Posterior vena cava (tissue), 2 donors: ENCODE measurements at regions of chr18 and their contacts with region 1.

Region 1: DNA sequence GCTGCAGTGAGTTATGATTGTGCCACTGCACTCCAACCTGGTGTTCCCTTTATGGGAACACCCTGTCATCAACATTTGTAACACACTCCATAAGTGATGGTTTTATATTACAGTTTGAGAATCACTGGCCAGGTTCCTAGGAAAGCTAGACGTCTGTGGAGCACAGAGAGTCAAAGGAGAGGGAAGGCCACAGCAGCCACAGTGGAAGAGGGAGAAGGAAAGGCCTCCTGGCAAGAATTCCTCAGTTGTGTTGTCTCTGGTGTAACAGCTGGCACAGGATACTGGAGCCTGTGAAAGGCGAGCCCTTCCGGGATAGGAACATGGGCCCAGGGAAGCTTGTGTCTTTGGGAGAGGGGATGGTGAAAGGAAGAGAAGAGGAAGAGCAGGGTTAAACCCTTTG is 360.5 kb upstream of the PIK3C3 start:
- DNase-seq: no peak

Region 2: GRCh38 chr18:41545091-41545888 is 49.3 kb before region 1 on chr18:
- intact Hi-C with region 1: loop called in 1 of 2 experiments (anchors 2 kb)
- DNase-seq: no peak

Region 3: DNA sequence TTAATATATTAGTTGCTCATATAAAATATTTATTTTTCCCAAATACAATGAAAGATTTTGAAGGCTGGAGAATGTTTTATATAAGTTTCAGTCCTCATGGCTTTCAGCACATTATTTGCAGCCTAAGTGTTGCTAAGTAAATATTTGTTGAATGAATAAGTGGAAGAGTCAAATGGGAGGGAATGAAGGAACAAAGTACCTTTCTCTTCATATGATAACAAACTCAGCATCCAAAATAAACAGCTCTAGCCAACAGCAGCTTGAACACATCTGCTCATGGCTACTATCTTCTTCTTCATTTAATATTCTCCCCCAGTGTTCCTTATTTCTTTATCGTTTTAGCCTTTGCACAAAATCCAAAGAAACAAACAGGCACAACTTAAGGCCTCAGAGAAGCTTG is 24.7 kb before region 1 on chr18:
- intact Hi-C with region 1: no loop called
- DNase-seq: no peak

Region 4: GRCh38 chr18:41666246-41666645 is 71.7 kb after region 1 on chr18:
- intact Hi-C with region 1: no loop called
- DNase-seq: no peak

Region 5: GRCh38 chr18:41732371-41732770 is 137.8 kb after region 1 on chr18:
- intact Hi-C with region 1: no loop called
- DNase-seq: no peak